Activated CD4-positive, alpha-beta memory T cell treated with anti-CD3 and anti-CD28 coated beads for 36 hours (primary cell): ENCODE measurements at regions of chr2 and their contacts with region 1.

Region 1: DNA sequence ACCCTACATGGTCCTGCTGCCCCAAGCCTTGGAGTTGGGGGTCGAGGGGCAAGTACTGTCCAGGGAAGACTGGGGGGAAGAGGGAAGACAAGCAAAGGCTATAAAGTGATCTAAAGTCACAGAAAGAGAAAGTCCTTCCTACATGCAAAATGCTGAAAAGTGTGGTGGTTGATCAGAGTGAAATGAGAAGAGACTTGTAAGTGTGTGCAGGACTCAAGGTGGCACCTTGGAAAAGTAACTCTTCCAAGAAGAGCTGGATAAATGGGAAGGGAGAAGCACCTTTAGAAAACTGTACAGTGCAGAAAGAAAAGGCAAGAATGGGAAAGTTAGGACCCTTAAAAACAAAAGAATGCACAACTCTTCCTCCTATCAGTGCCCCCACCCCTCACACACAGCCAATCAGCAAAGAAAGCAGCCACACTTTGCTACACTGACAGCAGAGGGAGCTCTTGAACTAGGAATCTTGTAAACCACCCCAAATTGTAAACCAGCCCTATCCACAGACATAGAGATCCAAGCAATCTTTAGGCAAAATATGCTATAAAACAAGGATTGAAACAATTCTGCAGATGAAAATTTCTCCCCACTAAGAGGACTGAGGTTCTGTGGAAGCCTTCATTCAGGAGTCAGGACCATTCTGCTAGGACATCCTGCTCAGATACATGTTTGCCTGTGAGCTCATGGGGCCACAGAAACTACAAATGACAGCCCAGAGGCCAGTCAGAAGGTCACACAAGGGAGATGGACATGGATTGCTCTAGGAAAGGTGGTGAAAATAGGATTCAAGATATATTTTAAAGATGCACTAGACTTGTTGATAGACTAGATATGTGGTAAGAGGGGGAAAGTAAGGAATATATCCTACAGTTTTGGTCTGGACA is 146.4 kb downstream of the FTCDNL1 start:
- DNase-seq: peak; percentile 32
- H3K4me3 Mint-ChIP-seq: no peak overlapping the region
- H3K27ac Mint-ChIP-seq: no peak overlapping the region
- H3K4me1 Mint-ChIP-seq: no peaks in the 10 kb centered on the region
- H3K27me3 Mint-ChIP-seq: peaks cover 1% of the 10 kb centered on the region

Region 2: DNA sequence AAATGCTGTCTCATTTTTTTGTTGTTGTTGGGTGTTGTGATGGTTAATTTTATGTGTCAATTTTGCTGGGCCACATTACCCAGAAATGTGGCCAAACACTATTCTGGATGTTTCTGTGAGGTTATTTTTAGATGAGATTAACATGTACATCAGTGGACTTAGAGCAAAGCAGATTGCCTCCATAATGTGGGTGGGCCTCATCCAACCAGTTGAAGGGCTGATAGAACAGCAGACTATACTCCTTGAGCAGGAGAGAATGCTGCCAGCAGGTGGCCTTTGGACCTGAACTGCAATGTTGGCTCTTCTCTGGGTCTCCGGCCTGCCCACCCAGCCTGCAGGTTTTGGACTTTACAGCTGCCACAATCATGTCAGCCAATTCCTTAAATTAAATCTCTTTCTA is 22.6 kb before region 1 on chr2:
- CTCF ChIA-PET with region 1: no interaction called
- POLR2A ChIA-PET with region 1: no interaction called
- intact Hi-C with region 1: no loop called
- DNase-seq: no peak
- H3K4me3 Mint-ChIP-seq: no peak overlapping the region
- H3K27ac Mint-ChIP-seq: no peak overlapping the region
- H3K4me1 Mint-ChIP-seq: peaks cover 6% of the 10 kb centered on the region
- H3K27me3 Mint-ChIP-seq: no peaks in the 10 kb centered on the region

Region 3: DNA sequence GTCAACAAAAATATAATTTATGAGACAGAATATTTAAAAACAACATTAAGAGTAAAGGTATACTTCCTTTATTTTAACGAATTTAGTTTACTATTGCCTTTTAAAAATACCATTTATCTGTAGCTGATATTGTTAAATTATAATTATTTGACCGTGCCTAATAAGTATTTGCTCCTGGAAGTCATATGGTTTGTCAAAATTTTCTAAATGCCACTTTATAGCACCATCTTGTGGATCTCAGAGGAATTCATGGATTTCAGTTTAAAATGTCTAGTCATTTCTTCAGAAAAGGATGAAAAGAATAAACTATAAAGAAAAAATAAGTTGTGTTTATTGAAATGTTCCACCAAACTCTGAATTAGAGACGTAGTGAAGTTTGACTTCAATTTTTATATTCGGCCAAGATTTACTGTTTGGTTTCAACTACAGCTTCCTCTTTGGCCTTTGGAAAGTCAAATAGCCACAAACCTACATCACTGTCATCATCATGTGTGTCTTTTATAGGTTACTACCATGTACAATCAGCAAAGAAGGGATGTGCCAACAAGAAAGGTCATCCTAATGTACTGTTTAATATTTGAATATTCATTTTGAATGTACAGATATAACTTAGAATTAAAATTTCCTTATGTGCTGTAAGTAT is 156.7 kb after region 1 on chr2:
- CTCF ChIA-PET with region 1: interaction called, 9 read pairs
- POLR2A ChIA-PET with region 1: no interaction called
- intact Hi-C with region 1: loop called (anchors 1 kb)
- DNase-seq: no peak
- H3K4me3 Mint-ChIP-seq: no peak overlapping the region
- H3K27ac Mint-ChIP-seq: no peak overlapping the region
- H3K4me1 Mint-ChIP-seq: no peaks in the 10 kb centered on the region
- H3K27me3 Mint-ChIP-seq: peaks cover 5% of the 10 kb centered on the region